ENCODE measurements at regions of chr9 and their contacts with region 1.

Region 1: GRCh38 chr9:15552636-15553527 is at the start of gene CCDC171:
- DNase-seq: peak; percentile 91 to 95
- H3K4me3 ChIP-seq: peak within 1 kb of the TSS; percentile 46
- H3K4me1 ChIP-seq: peaks cover 6% of the 10 kb centered on the region; the same call in 1 of the 2 replicates
- H3K27me3 ChIP-seq: no peaks in the 10 kb centered on the region

Region 2: DNA sequence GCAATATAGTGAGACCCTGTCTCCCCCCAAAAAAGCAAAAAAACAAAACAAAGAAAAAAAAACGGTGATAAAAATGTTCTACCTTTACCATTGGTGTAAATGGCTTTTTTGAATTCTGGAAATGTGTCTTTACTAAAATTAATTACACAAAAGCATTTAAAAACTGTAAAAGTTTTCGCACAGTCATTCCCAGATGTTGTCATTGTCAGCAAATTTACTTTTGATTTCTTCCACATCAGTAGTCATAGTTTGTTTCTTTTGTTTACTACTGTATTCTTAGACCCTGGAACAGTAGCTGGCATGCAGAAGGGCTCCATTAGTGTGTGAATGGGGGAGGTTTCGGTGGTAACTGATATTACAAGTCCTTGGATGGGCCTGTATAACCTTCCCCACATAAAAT is 39.4 kb after region 1 on chr9:
- in situ Hi-C with region 1: loop called (anchors 5 kb)
- DNase-seq: peak; percentile 22 to 46
- H3K4me3 ChIP-seq: no peak overlapping the region
- H3K4me1 ChIP-seq: peaks cover 17% of the 10 kb centered on the region
- H3K27me3 ChIP-seq: no peaks in the 10 kb centered on the region

Region 3: GRCh38 chr9:15982182-15982581 is 429.3 kb after region 1 on chr9:
- in situ Hi-C with region 1: no loop called
- DNase-seq: no peak
- H3K4me3 ChIP-seq: no peak overlapping the region
- H3K4me1 ChIP-seq: no peaks in the 10 kb centered on the region
- H3K27me3 ChIP-seq: no peaks in the 10 kb centered on the region

Measured in HAP-1 (cell line).